ENCODE measurements at regions of chr14 and their contacts with region 1.

Region 1: GRCh38 chr14:55102141-55102621 is 26.9 kb upstream of the LGALS3 start:
- DNase-seq: peak; percentile 72
- H3K4me3 Mint-ChIP-seq: peak overlapping the region; percentile 61
- H3K27ac Mint-ChIP-seq: peak overlapping the region; percentile 99
- H3K4me1 Mint-ChIP-seq: peaks cover 71% of the 10 kb centered on the region
- H3K27me3 Mint-ChIP-seq: no peaks in the 10 kb centered on the region

Region 2: GRCh38 chr14:55117803-55118441 is 15.7 kb after region 1 on chr14:
- CTCF ChIA-PET with region 1: interaction called, 6 read pairs
- POLR2A ChIA-PET with region 1: interaction called, 12 read pairs
- DNase-seq: no peak
- H3K4me3 Mint-ChIP-seq: no peak overlapping the region
- H3K27ac Mint-ChIP-seq: no peak overlapping the region
- H3K4me1 Mint-ChIP-seq: peaks cover 2% of the 10 kb centered on the region
- H3K27me3 Mint-ChIP-seq: peaks cover 10% of the 10 kb centered on the region

Region 3: DNA sequence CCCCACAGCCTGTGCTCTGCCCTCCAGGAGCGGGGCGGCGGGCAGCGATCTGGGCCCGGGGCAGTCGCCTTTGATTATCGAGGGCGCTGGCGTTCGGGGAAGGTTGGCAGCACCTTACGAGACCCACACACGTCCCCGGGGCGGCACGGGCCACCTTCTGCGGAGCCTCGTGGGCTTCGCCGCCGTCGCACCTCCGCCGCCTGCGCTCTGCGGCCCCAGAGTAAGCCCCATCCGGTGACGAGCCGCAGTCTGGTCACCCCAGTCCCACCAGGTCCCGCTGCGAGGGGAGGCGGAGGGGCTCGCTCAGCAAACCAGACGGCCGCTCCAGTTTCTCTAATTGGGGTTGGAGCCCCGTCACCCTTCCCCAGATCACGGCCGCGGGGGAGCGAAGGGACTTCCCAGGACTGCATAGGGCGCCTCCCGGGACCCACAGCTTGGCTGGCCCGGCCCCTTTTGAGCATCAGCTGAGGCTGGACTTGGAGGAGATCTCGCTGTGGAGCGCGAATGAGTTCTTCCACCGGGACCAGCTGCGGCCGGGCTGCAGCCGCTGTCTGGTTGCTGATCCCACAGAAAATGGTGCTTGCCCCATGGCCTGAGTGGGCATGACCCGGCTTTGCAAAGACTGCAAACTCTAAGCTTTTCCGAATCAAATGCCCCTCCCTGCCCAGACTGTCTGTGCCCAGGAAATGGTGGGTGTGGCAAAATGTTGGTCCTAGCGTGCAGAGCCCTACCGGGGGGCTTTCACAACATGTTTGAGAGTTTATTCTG is 27.4 kb after region 1 on chr14:
- CTCF ChIA-PET with region 1: interaction called, 13 read pairs
- POLR2A ChIA-PET with region 1: interaction called, 177 read pairs
- DNase-seq: peak; percentile 63
- H3K4me3 Mint-ChIP-seq: peak overlapping the region; percentile 75
- H3K27ac Mint-ChIP-seq: peak overlapping the region; percentile 47
- H3K4me1 Mint-ChIP-seq: peaks cover 58% of the 10 kb centered on the region
- H3K27me3 Mint-ChIP-seq: peaks cover 10% of the 10 kb centered on the region

Region 4: GRCh38 chr14:55146425-55146824 is 44.2 kb after region 1 on chr14:
- CTCF ChIA-PET with region 1: no interaction called
- POLR2A ChIA-PET with region 1: interaction called, 12 read pairs
- DNase-seq: no peak
- H3K4me3 Mint-ChIP-seq: no peak overlapping the region
- H3K27ac Mint-ChIP-seq: no peak overlapping the region
- H3K4me1 Mint-ChIP-seq: peaks cover 31% of the 10 kb centered on the region
- H3K27me3 Mint-ChIP-seq: no peaks in the 10 kb centered on the region

Region 5: GRCh38 chr14:55191203-55192053 is 89.2 kb after region 1 on chr14 and contains the start of gene DLGAP5:
- CTCF ChIA-PET with region 1: interaction called, 3 read pairs
- POLR2A ChIA-PET with region 1: interaction called, 27 read pairs
- DNase-seq: peak; percentile 95
- H3K4me3 Mint-ChIP-seq: peak within 1 kb of the TSS; percentile 77
- H3K27ac Mint-ChIP-seq: peak within 1 kb of the TSS; percentile 83
- H3K4me1 Mint-ChIP-seq: peaks cover 39% of the 10 kb centered on the region
- H3K27me3 Mint-ChIP-seq: peaks cover 4% of the 10 kb centered on the region
- total RNA-seq, gene DLGAP5: 89.7 to 95.8 TPM